ENCODE measurements at regions of chr6 and their contacts with region 1.

Region 1: DNA sequence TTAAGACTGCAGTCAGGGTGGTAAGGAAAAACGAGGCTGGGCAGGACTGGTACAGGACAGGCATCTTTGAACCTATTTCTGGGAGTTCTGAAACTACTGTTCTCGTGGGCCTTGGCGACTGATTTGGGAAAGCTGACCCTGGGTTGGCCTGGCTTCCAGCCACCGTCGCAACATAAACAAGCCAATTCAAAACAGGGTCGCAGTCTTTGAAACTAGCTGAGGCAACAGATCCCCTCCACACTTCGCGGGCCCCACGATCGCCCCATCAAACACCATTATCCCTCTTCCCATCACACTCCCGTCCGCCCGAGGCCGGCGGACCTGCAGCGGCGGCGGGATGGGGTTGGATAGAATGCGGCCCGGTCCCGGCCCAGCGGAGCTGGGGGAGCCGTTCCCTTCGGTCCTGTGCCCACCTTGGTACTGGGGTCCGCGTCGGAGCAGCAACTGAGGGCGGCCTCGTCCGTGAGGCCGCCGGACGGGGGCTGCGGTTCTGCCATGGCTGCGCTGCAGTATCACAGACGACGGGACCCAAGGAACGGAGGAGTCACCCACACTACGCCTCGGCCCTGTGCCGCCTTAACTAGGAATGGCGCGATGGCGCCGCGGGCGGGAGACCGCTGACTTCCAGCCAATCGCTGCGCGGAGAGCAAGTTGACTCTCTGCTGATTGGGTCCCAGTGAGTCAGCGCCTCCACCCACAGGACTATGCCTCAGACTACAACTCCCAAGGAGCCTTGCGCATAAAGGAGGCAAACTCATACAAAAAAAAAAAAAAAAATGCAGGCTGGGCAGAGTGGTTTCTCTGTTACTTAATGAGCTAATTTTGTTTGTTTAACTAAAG is at the start of gene GLO1:
- DNase-seq: peak; percentile 94
- ATAC-seq: peak; percentile 100
- H3K4me3 ChIP-seq: peak within 1 kb of the TSS; percentile 80 to 88
- H3K27ac ChIP-seq: peak within 1 kb of the TSS; percentile 85
- H3K4me1 ChIP-seq: no peaks in the 10 kb centered on the region
- H3K27me3 ChIP-seq: no peaks in the 10 kb centered on the region
- CTCF ChIP-seq: no peak
- total RNA-seq, gene GLO1: 125 TPM

Region 2: GRCh38 chr6:37451441-37452193 is 1251.2 kb before region 1 on chr6:
- CTCF ChIA-PET with region 1: no interaction called
- POLR2A ChIA-PET with region 1: no interaction called
- in situ Hi-C with region 1: no loop called
- intact Hi-C with region 1: no loop called
- DNase-seq: no peak
- ATAC-seq: no peak
- H3K4me3 ChIP-seq: no peak overlapping the region
- H3K27ac ChIP-seq: no peak overlapping the region
- H3K4me1 ChIP-seq: no peaks in the 10 kb centered on the region
- H3K27me3 ChIP-seq: no peaks in the 10 kb centered on the region
- CTCF ChIP-seq: no peak

Region 3: DNA sequence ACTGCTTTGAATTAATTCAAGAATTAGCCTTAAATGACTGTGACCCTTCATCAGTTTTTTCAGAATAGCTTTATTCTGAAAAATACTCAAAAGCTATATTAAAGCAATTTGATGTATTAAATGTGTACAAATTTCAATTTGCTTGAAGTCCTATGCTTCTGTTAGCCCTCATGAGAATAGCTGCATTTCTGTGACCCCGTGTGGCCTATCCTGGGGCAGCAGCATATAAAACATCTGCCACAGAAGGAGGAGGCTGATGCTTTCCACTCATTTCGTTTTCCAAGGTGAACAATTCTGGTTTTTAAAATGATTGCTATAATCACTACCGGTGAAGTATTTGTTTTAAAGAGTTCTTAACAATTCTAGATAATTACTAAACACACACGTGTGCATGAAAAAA is 423.4 kb before region 1 on chr6:
- CTCF ChIA-PET with region 1: no interaction called
- POLR2A ChIA-PET with region 1: interaction called, 11 read pairs
- in situ Hi-C with region 1: no loop called
- intact Hi-C with region 1: no loop called
- DNase-seq: no peak
- ATAC-seq: no peak
- H3K4me3 ChIP-seq: no peak overlapping the region
- H3K27ac ChIP-seq: no peak overlapping the region
- H3K4me1 ChIP-seq: no peaks in the 10 kb centered on the region; the same call in 1 of the 2 replicates
- H3K27me3 ChIP-seq: no peaks in the 10 kb centered on the region
- CTCF ChIP-seq: peak; percentile 34

Region 4: DNA sequence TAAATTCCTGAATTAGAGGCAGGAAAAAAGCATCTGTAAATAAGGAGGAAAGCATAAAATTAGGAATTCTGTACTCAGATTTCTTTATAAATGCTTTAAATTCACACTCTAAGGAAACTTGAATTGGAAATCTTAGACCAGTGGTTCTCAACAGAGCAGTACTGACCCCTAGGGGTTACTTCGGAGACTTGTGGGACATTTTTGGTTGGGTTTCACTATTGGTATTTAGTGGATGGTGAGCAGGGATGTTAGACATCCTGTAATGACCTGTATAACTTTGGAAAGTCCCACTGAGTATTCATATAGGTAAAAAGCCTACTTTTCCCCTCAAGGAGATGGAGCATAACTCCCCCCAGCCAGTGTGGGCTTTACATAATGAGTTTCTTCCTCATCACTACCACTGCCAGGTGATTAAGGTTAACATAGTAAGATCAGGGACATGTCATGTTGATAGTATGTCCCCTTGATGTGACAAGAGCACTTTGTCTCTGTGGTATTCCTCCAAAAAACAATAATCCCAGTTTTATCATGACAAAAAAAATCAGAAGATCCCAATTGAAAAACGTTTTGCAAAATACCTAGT is 30.8 kb before region 1 on chr6:
- CTCF ChIA-PET with region 1: no interaction called
- POLR2A ChIA-PET with region 1: no interaction called
- in situ Hi-C with region 1: no loop called
- intact Hi-C with region 1: loop called (anchors 1 kb)
- DNase-seq: peak; percentile 43
- ATAC-seq: peak; percentile 91
- H3K4me3 ChIP-seq: no peak overlapping the region
- H3K27ac ChIP-seq: no peak overlapping the region
- H3K4me1 ChIP-seq: no peaks in the 10 kb centered on the region
- H3K27me3 ChIP-seq: no peaks in the 10 kb centered on the region
- CTCF ChIP-seq: peak; percentile 80

Region 5: DNA sequence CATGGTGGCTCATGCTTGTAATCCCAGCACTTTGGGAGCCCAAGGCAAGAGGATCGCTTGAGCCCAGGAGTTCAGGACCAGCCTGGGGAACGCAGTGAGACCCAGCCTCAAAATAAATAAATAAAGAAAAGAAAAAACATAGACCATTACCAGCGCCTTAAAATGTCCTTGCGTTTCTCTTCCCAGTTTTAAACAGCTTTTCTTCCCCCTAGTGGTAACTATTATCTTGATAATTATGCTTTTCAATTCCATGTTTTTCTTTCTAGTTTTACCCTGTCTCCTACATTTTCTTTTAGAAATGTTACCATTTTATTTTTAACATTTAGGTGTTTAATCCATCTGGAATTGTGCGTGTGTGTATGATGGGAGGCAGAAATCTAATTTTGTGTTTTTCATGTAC is 36.8 kb after region 1 on chr6:
- CTCF ChIA-PET with region 1: interaction called, 4 read pairs
- POLR2A ChIA-PET with region 1: interaction called, 15 read pairs
- in situ Hi-C with region 1: no loop called
- intact Hi-C with region 1: no loop called
- DNase-seq: no peak
- ATAC-seq: no peak
- H3K4me3 ChIP-seq: no peak overlapping the region
- H3K27ac ChIP-seq: no peak overlapping the region
- H3K4me1 ChIP-seq: no peaks in the 10 kb centered on the region
- H3K27me3 ChIP-seq: peaks cover 24% of the 10 kb centered on the region
- CTCF ChIP-seq: peak; percentile 51

Region 6: DNA sequence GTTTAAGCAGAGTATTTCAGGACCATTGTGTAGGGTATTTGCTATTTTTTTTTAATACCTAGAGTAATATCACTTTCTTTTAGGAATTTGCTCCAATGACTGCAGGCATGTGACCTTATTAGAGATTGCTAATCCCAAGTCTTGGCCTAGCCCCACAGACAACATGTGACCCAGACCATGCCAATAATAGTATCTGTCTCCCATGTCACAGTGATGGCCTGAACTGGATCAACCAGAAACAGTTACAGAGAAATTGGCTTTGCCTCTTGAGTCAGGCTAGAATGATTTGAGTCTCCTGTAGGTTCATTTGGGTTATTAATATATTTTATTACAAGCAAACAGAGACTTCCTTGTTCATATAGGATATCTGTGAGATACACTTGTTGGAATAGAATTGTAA is 129.1 kb after region 1 on chr6:
- CTCF ChIA-PET with region 1: no interaction called
- POLR2A ChIA-PET with region 1: no interaction called
- in situ Hi-C with region 1: no loop called
- intact Hi-C with region 1: no loop called
- DNase-seq: no peak
- ATAC-seq: no peak
- H3K4me3 ChIP-seq: no peak overlapping the region
- H3K27ac ChIP-seq: no peak overlapping the region
- H3K4me1 ChIP-seq: no peaks in the 10 kb centered on the region
- H3K27me3 ChIP-seq: peaks cover 3% of the 10 kb centered on the region
- CTCF ChIP-seq: no peak

Region 7: DNA sequence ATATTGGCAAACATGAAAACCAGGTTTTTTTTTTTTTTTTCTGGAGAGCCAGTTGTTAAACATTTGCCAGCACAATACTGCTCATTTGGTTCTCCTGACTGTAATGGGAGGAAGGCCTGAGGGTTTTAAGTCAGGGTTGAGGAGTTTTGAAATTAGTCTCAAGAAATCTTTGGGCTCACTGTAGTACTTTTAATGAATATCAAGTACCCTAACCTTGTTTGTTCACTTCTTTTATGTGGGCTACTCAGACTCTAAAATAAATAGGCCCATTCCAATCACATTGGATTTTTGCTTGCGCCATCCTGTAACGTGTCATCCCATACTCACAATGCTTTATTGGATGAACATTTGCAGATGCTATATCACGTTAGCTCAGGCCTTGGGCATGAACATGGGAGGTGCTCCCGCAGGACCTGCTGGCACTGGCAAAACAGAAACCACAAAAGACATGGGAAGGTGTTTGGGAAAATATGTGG is 159.2 kb after region 1 on chr6:
- CTCF ChIA-PET with region 1: no interaction called
- POLR2A ChIA-PET with region 1: no interaction called
- in situ Hi-C with region 1: no loop called
- intact Hi-C with region 1: no loop called
- DNase-seq: no peak
- ATAC-seq: no peak
- H3K4me3 ChIP-seq: no peak overlapping the region
- H3K27ac ChIP-seq: no peak overlapping the region
- H3K4me1 ChIP-seq: no peaks in the 10 kb centered on the region
- H3K27me3 ChIP-seq: peaks cover 23% of the 10 kb centered on the region
- CTCF ChIP-seq: no peak

Region 8: GRCh38 chr6:39440039-39440426 is 737.3 kb after region 1 on chr6:
- CTCF ChIA-PET with region 1: no interaction called
- POLR2A ChIA-PET with region 1: interaction called, 13 read pairs
- in situ Hi-C with region 1: no loop called
- intact Hi-C with region 1: no loop called
- DNase-seq: no peak
- ATAC-seq: no peak
- H3K4me3 ChIP-seq: no peak overlapping the region
- H3K27ac ChIP-seq: no peak overlapping the region
- H3K4me1 ChIP-seq: no peaks in the 10 kb centered on the region
- H3K27me3 ChIP-seq: no peaks in the 10 kb centered on the region
- CTCF ChIP-seq: no peak

Measured in Panc1 (cell line).